Right lobe of liver (tissue), 6 donors: ENCODE measurements at regions of chr11 and their contacts with region 1.

Region 1: DNA sequence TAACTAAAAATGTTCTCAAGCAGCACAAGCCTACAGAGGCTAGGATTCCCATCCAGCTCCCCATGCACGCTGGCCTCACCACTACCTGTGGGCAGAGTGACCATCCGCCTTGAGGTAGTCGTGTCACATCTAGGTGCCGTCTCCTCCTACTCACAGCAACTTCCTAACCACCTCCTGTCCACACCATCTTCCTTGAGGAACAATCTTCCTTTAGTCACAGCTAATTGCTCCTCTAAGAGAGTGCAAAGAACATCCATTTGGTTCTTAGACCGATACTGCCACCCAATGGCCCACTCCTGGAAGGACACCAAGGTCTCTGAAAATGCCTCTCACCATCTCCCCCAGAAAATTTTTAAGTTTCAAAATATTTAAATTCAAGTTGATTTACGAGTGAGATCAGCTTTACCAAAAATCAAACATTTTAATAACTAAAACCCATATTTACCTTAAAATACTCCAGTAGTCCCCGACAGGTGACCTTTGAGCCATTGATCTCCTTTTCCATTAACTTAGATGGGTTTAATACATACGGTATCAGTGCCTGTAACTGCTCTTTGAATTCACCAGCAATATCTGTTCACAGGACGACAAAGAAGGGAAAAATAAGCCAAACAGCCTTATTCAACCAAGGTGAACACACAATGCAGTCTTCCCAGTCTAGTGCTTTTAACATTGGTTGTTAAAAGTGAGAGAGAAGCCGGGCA is 21.7 kb upstream of the PLAAT3 start:
- DNase-seq: peak in 1 of 3 donors; percentile 37
- ATAC-seq: peak; percentile 80 to 87 (median 84)
- H3K4me3 ChIP-seq: no peak overlapping the region
- H3K27ac ChIP-seq: no peak overlapping the region
- H3K4me1 ChIP-seq: peaks cover 0 to 8% (median 3%) of the 10 kb centered on the region in 4 donors
- H3K27me3 ChIP-seq: no peaks in the 10 kb centered on the region
- CTCF ChIP-seq: peak; percentile 73 to 84 (median 80)
- POLR2A ChIP-seq: no peak

Region 2: DNA sequence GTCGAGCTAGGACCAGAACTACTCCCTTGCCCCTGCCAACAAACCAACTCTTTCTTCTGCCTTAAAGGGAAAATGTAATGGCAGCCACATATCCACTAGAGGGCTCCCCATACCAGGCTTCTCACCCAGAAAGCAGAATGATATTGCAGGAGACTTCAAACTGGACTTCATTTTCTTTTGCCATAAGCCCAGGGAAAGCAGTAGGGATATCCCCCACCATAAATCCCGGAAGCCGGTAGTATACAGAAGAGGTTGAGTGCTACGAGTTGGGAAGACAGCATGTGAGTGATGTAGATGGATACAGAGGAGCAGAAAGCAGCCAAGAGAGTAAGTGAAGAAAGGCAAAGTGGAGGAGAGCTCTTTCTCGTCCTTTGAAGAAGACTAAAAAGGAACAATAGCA is 157.0 kb before region 1 on chr11:
- intact Hi-C with region 1: loop called in 1 of 2 experiments (anchors 10 kb)
- DNase-seq: peak in 1 of 3 donors; percentile 59
- ATAC-seq: peak; percentile 92 to 97 (median 96)
- H3K4me3 ChIP-seq: no peak overlapping the region
- H3K27ac ChIP-seq: no peak overlapping the region
- H3K4me1 ChIP-seq: no peaks in the 10 kb centered on the region
- H3K27me3 ChIP-seq: no peaks in the 10 kb centered on the region
- CTCF ChIP-seq: peak; percentile 86 to 93 (median 91)
- POLR2A ChIP-seq: no peak